Heart left ventricle (tissue), 16 donors: ENCODE measurements at regions of chr16 and their contacts with region 1.

Region 1: DNA sequence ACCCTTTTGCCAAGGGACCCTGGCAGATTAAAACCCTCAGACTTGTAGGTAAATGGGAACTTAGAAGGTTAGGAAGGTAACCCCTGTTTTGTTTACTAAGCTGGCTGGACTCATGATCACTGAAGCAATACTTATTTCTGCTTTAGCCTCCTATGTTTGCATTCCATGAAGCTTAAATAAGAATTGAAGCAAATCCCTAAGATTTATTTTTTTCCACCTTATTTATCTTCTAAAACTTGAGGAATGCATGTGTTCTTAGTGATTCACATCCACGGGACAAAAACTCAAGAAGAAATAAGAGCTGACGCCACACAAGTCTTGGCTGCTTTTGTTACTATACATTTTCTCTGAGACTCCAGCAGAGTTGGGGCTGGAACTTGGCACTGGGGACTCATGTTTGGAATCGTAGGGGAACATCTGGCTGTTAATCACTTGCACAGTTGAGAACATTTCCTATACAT is 35.5 kb downstream of the CLUAP1 start:
- DNase-seq: no peak
- ATAC-seq: no peak
- H3K4me3 ChIP-seq: no peak overlapping the region
- H3K27ac ChIP-seq: peak overlapping the region in 7 of 12 donors; percentile 6 to 70 (median 53)
- H3K4me1 ChIP-seq: peaks cover 0 to 9% (median 1%) of the 10 kb centered on the region in 12 donors
- H3K27me3 ChIP-seq: no peaks in the 10 kb centered on the region
- CTCF ChIP-seq: no peak
- POLR2A ChIP-seq: no peak

Region 2: GRCh38 chr16:3570420-3571062 is 34.2 kb after region 1 on chr16:
- intact Hi-C with region 1: loop called in 1 of 10 experiments (anchors 2 kb)
- DNase-seq: no peak
- ATAC-seq: no peak
- H3K4me3 ChIP-seq: no peak overlapping the region
- H3K27ac ChIP-seq: no peak overlapping the region
- H3K4me1 ChIP-seq: no peaks in the 10 kb centered on the region
- H3K27me3 ChIP-seq: no peaks in the 10 kb centered on the region
- CTCF ChIP-seq: no peak
- POLR2A ChIP-seq: no peak